ENCODE measurements at regions of chr9 and their contacts with region 1.

Region 1: GRCh38 chr9:117411548-117411947 is 3.3 kb downstream of the ASTN2 start:
- DNase-seq: peak in 1 of 2 experiments; percentile 35
- H3K4me3 ChIP-seq: no peak overlapping the region
- H3K4me3 Mint-ChIP-seq: no peak overlapping the region
- H3K27ac Mint-ChIP-seq: no peak overlapping the region
- H3K4me1 ChIP-seq: 0 out of 2 replicates have a peak, but pooled peaks cover 4% of the 10 kb centered on the region
- H3K4me1 Mint-ChIP-seq: peaks cover 4% of the 10 kb centered on the region
- H3K27me3 ChIP-seq: 0 out of 2 replicates have a peak, but pooled peaks cover 3% of the 10 kb centered on the region
- H3K27me3 Mint-ChIP-seq: peaks cover 21% of the 10 kb centered on the region
- CTCF ChIP-seq: peak; percentile 61 to 63

Region 2: GRCh38 chr9:117160254-117160653 is 251.3 kb before region 1 on chr9:
- CTCF ChIA-PET with region 1: no interaction called
- POLR2A ChIA-PET with region 1: no interaction called
- intact Hi-C with region 1: loop called (anchors 1 kb)
- DNase-seq: no peak
- H3K4me3 ChIP-seq: no peak overlapping the region
- H3K4me3 Mint-ChIP-seq: no peak overlapping the region
- H3K27ac Mint-ChIP-seq: no peak overlapping the region
- H3K4me1 ChIP-seq: no peaks in the 10 kb centered on the region
- H3K4me1 Mint-ChIP-seq: no peaks in the 10 kb centered on the region
- H3K27me3 ChIP-seq: no peaks in the 10 kb centered on the region
- H3K27me3 Mint-ChIP-seq: no peaks in the 10 kb centered on the region
- CTCF ChIP-seq: peak; percentile 38 to 49

Region 3: GRCh38 chr9:117247266-117247665 is 164.3 kb before region 1 on chr9:
- CTCF ChIA-PET with region 1: no interaction called
- POLR2A ChIA-PET with region 1: no interaction called
- intact Hi-C with region 1: loop called (anchors 5 kb)
- DNase-seq: peak in 1 of 2 experiments; percentile 29
- H3K4me3 ChIP-seq: no peak overlapping the region
- H3K4me3 Mint-ChIP-seq: no peak overlapping the region
- H3K27ac Mint-ChIP-seq: no peak overlapping the region
- H3K4me1 ChIP-seq: no peaks in the 10 kb centered on the region
- H3K4me1 Mint-ChIP-seq: no peaks in the 10 kb centered on the region
- H3K27me3 ChIP-seq: no peaks in the 10 kb centered on the region
- H3K27me3 Mint-ChIP-seq: peaks cover 18% of the 10 kb centered on the region
- CTCF ChIP-seq: peak; percentile 31 to 41

Region 4: GRCh38 chr9:118192810-118193209 is 781.3 kb after region 1 on chr9:
- CTCF ChIA-PET with region 1: no interaction called
- POLR2A ChIA-PET with region 1: no interaction called
- intact Hi-C with region 1: no loop called
- DNase-seq: no peak
- H3K4me3 ChIP-seq: no peak overlapping the region
- H3K4me3 Mint-ChIP-seq: no peak overlapping the region
- H3K27ac Mint-ChIP-seq: no peak overlapping the region
- H3K4me1 ChIP-seq: no peaks in the 10 kb centered on the region
- H3K4me1 Mint-ChIP-seq: no peaks in the 10 kb centered on the region
- H3K27me3 ChIP-seq: no peaks in the 10 kb centered on the region
- H3K27me3 Mint-ChIP-seq: no peaks in the 10 kb centered on the region
- CTCF ChIP-seq: no peak

Measured in Caco-2 (cell line).